Esophagus squamous epithelium (tissue), 5 donors: ENCODE measurements at regions of chr17 and their contacts with region 1.

Region 1: GRCh38 chr17:80866147-80866793 is 125.4 kb upstream of the CHMP6 start:
- DNase-seq: no peak
- H3K4me3 ChIP-seq: no peak overlapping the region
- H3K27ac ChIP-seq: no peak overlapping the region
- H3K4me1 ChIP-seq: peaks cover 0 to 17% (median 0%) of the 10 kb centered on the region in 3 donors
- H3K27me3 ChIP-seq: no peaks in the 10 kb centered on the region
- CTCF ChIP-seq: peak; percentile 31 to 74 (median 67)
- POLR2A ChIP-seq: no peak

Region 2: GRCh38 chr17:80981062-80981902 is 115.0 kb after region 1 on chr17:
- intact Hi-C with region 1: loop called (anchors 10 kb)
- DNase-seq: no peak
- H3K4me3 ChIP-seq: peak overlapping the region in 2 of 4 donors; percentile 10 to 24
- H3K27ac ChIP-seq: no peak overlapping the region
- H3K4me1 ChIP-seq: peaks cover 4 to 25% (median 8%) of the 10 kb centered on the region in 3 donors
- H3K27me3 ChIP-seq: peaks cover 0 to 36% (median 0%) of the 10 kb centered on the region in 4 donors
- CTCF ChIP-seq: peak; percentile 71 to 90 (median 80)
- POLR2A ChIP-seq: no peak